PC-3 (cell line): ENCODE measurements at regions of chr12 and their contacts with region 1.

Region 1: DNA sequence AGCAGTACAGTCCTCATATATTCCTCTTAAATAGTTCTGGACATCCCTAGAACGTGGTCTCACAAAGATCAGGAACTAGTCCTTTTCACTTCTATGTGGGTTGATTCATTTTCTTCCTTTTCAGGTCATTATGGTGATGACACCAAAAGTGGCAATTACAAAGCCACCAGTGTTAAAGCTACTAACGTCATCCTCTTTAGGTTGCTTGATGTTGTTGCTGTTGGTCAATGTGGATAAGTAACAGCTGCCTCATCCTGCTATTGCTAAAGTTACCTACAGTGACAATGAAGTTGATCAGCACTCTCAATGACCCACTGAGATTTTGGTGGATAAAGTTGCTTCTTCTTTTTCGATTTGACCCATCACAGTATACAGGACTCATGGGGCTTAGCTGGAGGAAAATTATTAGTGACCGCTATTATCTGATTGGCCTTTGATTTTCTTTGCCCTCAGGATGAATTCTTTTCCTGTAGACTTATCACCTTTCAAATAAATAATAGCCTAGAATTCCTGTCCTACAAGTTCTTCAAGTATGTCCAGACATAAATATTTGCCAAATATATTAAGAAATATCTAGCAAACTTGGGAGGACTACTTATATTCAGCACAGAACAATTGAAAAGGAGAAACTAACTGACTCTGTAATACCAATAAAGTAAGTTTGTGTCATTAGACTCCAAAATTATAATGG is 54.0 kb upstream of the ATP2B1 start:
- DNase-seq: peak; percentile 88
- ATAC-seq: peak; percentile 39
- H3K4me3 ChIP-seq: no peak overlapping the region
- H3K27ac ChIP-seq: peak overlapping the region; percentile 73
- H3K4me1 ChIP-seq: peaks cover 42% of the 10 kb centered on the region
- H3K27me3 ChIP-seq: no peaks in the 10 kb centered on the region
- CTCF ChIP-seq: no peak

Region 2: DNA sequence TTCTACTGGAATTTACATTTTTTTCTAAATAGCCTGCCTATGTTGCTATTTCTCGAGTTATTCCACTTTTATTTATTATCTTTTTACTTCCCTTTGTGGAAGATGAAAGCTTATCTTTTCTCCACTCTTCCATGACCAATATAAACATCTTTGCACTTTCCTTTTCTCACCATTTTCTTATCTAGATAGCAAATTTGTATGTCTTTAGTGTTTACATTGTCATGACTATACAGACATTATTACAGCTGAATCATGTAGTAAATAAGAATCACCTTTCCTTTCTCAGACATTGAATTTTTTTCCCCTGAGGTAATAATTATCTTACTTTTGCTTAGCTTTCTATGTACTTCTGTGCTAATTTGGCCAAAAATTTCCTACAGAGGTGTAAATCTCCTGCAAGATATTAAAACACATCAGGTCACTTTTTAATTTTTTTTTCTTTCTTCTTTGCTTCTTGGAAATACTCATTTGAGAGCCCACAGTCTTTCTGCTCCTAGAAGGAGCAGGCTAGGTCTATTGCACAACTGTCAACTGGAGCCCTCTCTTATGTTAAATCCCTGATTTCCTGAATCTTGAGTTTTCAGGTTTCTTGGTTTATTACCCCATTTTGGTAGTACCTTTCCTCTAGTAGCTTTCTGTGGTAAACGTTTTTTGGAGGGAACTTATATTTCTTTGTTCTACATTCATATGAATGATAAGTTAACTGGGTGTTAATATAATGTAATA is 55.0 kb after region 1 on chr12:
- CTCF ChIA-PET with region 1: no interaction called
- POLR2A ChIA-PET with region 1: no interaction called
- intact Hi-C with region 1: loop called (anchors 5 kb)
- DNase-seq: peak; percentile 74
- ATAC-seq: peak; percentile 84
- H3K4me3 ChIP-seq: no peak overlapping the region
- H3K27ac ChIP-seq: peak overlapping the region; percentile 81
- H3K4me1 ChIP-seq: peaks cover 33% of the 10 kb centered on the region
- H3K27me3 ChIP-seq: no peaks in the 10 kb centered on the region
- CTCF ChIP-seq: no peak